Common myeloid progenitor, CD34-positive (primary cell): ENCODE measurements at regions of chr2 and their contacts with region 1.

Region 1: DNA sequence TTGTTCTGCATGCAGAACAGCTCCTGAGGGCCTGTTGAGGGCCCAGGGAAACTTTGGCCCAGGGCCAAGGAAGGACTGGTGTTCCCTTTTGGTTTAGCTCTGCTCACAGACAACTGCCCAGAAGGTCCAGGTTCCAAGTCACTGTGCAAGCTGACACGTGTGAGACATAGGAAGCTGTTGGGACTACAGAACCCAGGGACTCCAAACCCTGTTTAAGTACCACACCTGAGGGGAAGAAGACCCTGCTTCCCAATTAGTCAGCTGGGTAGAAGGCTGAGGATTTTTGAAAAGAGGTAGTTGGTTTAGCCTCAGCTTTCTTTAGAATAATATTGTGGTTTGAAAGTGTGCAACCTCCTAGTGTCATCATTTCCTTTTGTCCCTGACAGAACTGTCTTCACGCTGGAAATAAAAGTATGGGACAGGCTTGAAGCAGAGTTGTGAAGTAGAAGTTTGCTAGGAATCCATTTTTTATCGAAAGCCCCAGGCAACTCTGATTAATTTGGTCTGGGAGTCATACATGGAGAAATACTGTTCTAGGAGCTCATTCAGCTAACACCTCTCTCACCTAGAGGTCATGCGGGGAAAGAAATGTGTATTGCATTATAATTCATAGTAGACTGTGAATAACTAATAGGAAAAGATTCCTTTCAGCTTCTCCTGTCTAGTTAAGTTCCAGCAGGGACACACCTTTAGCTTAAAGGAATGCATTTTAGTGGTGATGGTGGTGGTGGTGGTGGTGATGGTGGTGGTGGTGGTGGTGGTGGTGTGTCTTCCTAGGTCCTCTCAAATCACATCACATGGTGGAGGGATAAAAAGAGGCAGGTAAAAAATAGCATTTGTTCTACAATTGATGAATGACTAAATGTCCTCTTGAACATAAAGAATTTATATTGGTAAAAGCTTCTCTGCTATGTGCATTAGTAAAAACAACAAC is 19.8 kb upstream of the IL1RL1 start:
- DNase-seq: peak in 2 of 3 donors; percentile 57 to 64
- H3K4me3 ChIP-seq: peak overlapping the region in 1 of 7 experiments; percentile 3
- H3K27ac ChIP-seq: no peak overlapping the region
- H3K4me1 ChIP-seq: peaks cover 9 to 48% (median 25%) of the 10 kb centered on the region in 4 experiments
- H3K27me3 ChIP-seq: no peaks in the 10 kb centered on the region

Region 2: GRCh38 chr2:102301867-102302362 is 10.3 kb after region 1 on chr2:
- CTCF ChIA-PET with region 1: interaction called, 13 read pairs
- POLR2A ChIA-PET with region 1: no interaction called
- DNase-seq: peak; percentile 71 to 85 (median 78)
- H3K4me3 ChIP-seq: peak overlapping the region in 3 of 7 experiments; percentile 28 to 43 (median 29)
- H3K27ac ChIP-seq: no peak overlapping the region
- H3K4me1 ChIP-seq: peaks cover 2 to 36% (median 21%) of the 10 kb centered on the region in 4 experiments
- H3K27me3 ChIP-seq: no peaks in the 10 kb centered on the region